ENCODE measurements at regions of chr10 and their contacts with region 1.

Region 1: DNA sequence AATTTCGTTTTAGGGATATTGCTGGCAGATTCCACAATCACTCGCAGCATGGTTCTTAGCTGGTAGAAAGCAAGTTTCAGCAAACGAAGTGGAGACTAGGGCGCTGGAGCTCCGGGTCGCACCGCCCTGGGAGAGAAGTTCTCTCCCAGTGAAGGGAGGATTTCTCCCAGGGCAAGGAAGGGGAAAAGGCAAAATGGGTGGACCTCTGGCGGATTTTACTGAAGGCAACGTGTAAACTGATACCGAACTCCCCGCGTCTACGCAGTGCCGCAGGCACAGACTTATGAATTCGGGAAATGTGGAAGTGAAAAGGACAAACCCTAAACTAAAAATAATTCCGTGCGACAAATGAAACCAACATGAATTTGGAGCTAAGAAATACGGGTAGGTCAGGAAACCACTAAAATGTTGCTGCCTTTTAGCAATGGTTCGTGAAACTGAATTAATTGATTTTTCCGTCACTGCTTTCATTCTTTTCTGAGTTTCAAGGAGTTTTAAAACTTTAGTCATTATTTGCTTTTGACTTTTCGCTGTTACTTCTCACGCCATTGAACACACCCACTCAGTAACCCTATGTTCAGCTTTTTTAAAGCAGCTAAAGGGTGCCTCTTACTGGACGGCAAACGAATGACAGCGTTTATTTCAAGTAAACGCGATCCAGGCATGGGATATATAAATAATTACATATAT is at the start of gene MYOF:
- DNase-seq: peak in 1 of 2 experiments; percentile 59
- H3K4me3 ChIP-seq: peak within 1 kb of the TSS; percentile 66 to 82 (median 73); a peak in 7 of 8 replicates
- H3K27ac ChIP-seq: no peak within 1 kb of the TSS
- H3K4me1 ChIP-seq: peaks cover 0 to 2% (median 0%) of the 10 kb centered on the region in 4 experiments; a peak in 1 of 7 replicates
- H3K27me3 ChIP-seq: peaks cover 0 to 5% (median 0%) of the 10 kb centered on the region in 4 experiments; a peak in 4 of 7 replicates
- CTCF ChIP-seq: peak in 2 of 3 experiments; percentile 52 to 71; a peak in 3 of 4 replicates
- EP300 ChIP-seq: no peak
- POLR2A ChIP-seq: no peak
- RAD21 ChIP-seq: peak; percentile 90
- total RNA-seq, gene MYOF: 2.3 and 3.2 TPM in 2 replicates

Region 2: GRCh38 chr10:93309062-93309461 is 173.2 kb before region 1 on chr10:
- CTCF ChIA-PET with region 1: no interaction called
- POLR2A ChIA-PET with region 1: no interaction called
- DNase-seq: no peak
- H3K4me3 ChIP-seq: no peak overlapping the region
- H3K27ac ChIP-seq: no peak overlapping the region
- H3K4me1 ChIP-seq: no peaks in the 10 kb centered on the region
- H3K27me3 ChIP-seq: no peaks in the 10 kb centered on the region
- CTCF ChIP-seq: no peak
- EP300 ChIP-seq: no peak
- POLR2A ChIP-seq: no peak
- RAD21 ChIP-seq: no peak

Region 3: GRCh38 chr10:93363891-93364648 is 118.2 kb before region 1 on chr10:
- CTCF ChIA-PET with region 1: interaction called, 42 read pairs
- POLR2A ChIA-PET with region 1: no interaction called
- DNase-seq: no peak
- H3K4me3 ChIP-seq: no peak overlapping the region
- H3K27ac ChIP-seq: no peak overlapping the region
- H3K4me1 ChIP-seq: peaks cover 0 to 6% (median 0%) of the 10 kb centered on the region in 4 experiments; a peak in 1 of 7 replicates
- H3K27me3 ChIP-seq: no peaks in the 10 kb centered on the region
- CTCF ChIP-seq: no peak
- EP300 ChIP-seq: no peak
- POLR2A ChIP-seq: no peak
- RAD21 ChIP-seq: no peak

Region 4: DNA sequence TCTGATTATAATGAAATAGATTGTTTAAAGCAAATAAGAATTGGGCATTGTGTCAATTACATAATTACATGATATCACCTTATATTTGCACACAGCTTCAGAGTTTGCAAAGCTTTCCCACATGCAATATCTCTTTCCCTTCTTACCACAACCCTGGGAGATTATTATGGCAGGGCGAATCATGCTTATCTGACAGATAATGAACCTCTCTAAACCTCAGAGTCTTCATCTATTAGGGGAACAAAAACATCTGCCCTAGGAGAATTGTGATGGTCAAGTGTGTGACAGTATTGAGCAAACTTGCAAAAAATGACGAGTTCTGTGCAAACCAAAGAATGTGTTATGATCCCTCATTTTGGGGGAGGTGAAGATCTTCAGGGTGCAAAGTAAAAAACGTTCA is 90.2 kb before region 1 on chr10:
- CTCF ChIA-PET with region 1: interaction called, 26 read pairs
- POLR2A ChIA-PET with region 1: no interaction called
- DNase-seq: no peak
- H3K4me3 ChIP-seq: no peak overlapping the region
- H3K27ac ChIP-seq: no peak overlapping the region
- H3K4me1 ChIP-seq: peaks cover 0 to 3% (median 0%) of the 10 kb centered on the region in 4 experiments; a peak in 2 of 7 replicates
- H3K27me3 ChIP-seq: no peaks in the 10 kb centered on the region
- CTCF ChIP-seq: no peak
- EP300 ChIP-seq: no peak
- POLR2A ChIP-seq: no peak
- RAD21 ChIP-seq: no peak

Region 5: DNA sequence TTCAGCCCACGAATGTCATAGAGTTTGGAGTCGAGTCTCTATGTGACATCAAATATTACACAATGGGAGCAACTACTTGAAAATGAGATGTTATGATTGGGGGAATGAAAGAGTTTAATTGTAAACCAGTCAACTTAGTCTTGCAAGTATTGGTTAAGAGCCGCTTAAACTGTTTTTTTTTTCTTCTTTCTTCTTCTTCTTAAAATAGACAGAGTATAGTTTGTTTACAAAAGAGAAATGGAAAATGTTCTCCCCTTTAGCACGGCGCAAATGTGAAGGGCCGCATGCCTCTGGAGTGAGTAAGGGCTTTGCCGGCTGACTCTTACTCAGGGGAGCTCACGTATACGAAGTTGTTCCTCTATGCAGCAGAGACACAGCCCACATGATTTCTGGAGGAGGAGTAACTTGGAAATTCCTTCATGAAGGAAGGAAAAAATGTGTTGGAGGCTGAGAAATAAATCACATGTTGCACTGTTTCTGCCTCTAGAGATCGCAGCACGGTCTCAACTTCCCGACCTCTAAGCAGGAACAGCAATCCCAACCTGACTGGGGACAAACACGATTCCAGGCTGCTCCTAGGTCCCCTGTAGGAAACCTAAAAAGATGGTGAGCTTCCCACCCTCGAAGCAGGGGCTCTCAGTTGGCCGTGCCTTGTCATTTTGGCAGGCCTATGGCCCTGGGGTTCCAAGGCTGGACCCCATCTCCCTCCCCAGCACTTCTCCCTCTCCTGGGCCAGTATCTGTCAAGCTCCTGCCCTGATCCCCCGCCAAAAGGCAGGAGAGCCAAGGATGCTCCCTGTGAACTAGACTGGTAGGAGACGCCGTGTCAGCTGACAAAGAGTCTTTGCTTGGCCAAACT is 45.0 kb before region 1 on chr10:
- CTCF ChIA-PET with region 1: interaction called, 29 read pairs
- POLR2A ChIA-PET with region 1: interaction called, 5 read pairs
- DNase-seq: peak in 1 of 2 experiments; percentile 68
- H3K4me3 ChIP-seq: peak overlapping the region in 3 of 4 experiments; percentile 20 to 52 (median 31); a peak in 3 of 8 replicates
- H3K27ac ChIP-seq: peak overlapping the region; percentile 74
- H3K4me1 ChIP-seq: peaks cover 21 to 37% (median 34%) of the 10 kb centered on the region in 4 experiments
- H3K27me3 ChIP-seq: no peaks in the 10 kb centered on the region
- CTCF ChIP-seq: no peak
- EP300 ChIP-seq: peak in 1 of 2 experiments; percentile 52; a peak in 1 of 3 replicates
- POLR2A ChIP-seq: peak; percentile 48 to 75
- RAD21 ChIP-seq: no peak

Region 6: GRCh38 chr10:93463678-93464476 is 18.4 kb before region 1 on chr10:
- CTCF ChIA-PET with region 1: interaction called, 20 read pairs
- POLR2A ChIA-PET with region 1: interaction called, 3 read pairs
- DNase-seq: no peak
- H3K4me3 ChIP-seq: no peak overlapping the region
- H3K27ac ChIP-seq: no peak overlapping the region
- H3K4me1 ChIP-seq: peaks cover 0 to 2% (median under 1%) of the 10 kb centered on the region in 4 experiments; a peak in 3 of 7 replicates
- H3K27me3 ChIP-seq: no peaks in the 10 kb centered on the region
- CTCF ChIP-seq: no peak
- EP300 ChIP-seq: no peak
- POLR2A ChIP-seq: no peak
- RAD21 ChIP-seq: no peak

Region 7: GRCh38 chr10:93496322-93497041 is 14.2 kb after region 1 on chr10 and contains the start of gene CEP55:
- CTCF ChIA-PET with region 1: interaction called, 30 read pairs
- POLR2A ChIA-PET with region 1: interaction called, 4 read pairs
- DNase-seq: peak; percentile 73 to 95
- H3K4me3 ChIP-seq: peak within 1 kb of the TSS; percentile 73 to 79 (median 77)
- H3K27ac ChIP-seq: no peak within 1 kb of the TSS
- H3K4me1 ChIP-seq: no peaks in the 10 kb centered on the region; a peak in 1 of 7 replicates
- H3K27me3 ChIP-seq: peaks cover 0 to 2% (median 0%) of the 10 kb centered on the region in 4 experiments; a peak in 2 of 7 replicates
- CTCF ChIP-seq: no peak
- EP300 ChIP-seq: no peak
- POLR2A ChIP-seq: peak in 1 of 2 experiments; percentile 77; a peak in 2 of 3 replicates
- RAD21 ChIP-seq: no peak
- total RNA-seq, gene CEP55: 18.9 and 19.6 TPM in 2 replicates

Region 8: DNA sequence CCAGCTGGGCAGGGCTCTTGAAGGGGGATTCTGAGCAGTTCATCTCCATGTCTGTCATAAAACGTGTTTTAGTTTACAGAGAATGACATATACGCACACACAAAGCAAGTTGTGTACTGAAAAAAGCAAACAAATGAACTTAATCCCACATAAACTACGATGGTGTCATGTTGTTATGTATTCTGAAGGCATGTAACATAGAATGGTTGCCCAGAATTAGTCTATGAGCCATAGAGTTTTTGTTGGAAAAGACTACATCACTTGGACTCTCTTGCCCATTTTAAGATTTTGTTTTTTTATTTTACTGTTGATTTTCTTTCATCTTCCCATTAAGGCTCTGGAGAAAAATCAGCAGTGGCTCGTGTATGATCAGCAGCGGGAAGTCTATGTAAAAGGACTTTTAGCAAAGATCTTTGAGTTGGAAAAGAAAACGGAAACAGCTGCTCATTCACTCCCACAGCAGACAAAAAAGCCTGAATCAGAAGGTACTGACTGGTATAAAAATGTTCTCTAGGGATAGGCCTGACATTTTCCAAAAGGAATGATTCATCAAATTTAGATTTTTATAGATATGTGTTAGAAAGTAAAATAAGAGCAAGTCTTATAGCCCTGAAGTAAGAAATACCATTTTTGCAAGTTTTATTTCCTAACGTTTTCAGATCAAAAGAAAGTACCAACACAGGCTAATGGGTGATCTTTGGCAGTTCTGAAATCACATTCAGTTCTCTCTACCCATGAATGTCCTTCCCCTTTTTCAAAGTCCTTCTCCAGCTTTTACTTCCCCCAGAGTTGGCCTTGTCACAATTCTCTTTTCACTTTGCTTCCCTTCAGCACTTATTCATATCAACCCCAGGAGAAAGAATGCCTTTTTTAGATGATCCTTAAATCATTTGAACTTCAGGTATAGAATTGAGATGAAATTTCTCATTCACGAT is 33.0 kb after region 1 on chr10:
- CTCF ChIA-PET with region 1: interaction called, 201 read pairs
- POLR2A ChIA-PET with region 1: no interaction called
- DNase-seq: no peak
- H3K4me3 ChIP-seq: no peak overlapping the region
- H3K27ac ChIP-seq: no peak overlapping the region
- H3K4me1 ChIP-seq: no peaks in the 10 kb centered on the region; a peak in 1 of 7 replicates
- H3K27me3 ChIP-seq: no peaks in the 10 kb centered on the region
- CTCF ChIP-seq: no peak
- EP300 ChIP-seq: no peak
- POLR2A ChIP-seq: no peak
- RAD21 ChIP-seq: no peak

Region 9: GRCh38 chr10:93573051-93573909 is 91.0 kb after region 1 on chr10:
- CTCF ChIA-PET with region 1: no interaction called
- POLR2A ChIA-PET with region 1: no interaction called
- DNase-seq: no peak
- H3K4me3 ChIP-seq: no peak overlapping the region
- H3K27ac ChIP-seq: no peak overlapping the region
- H3K4me1 ChIP-seq: peaks cover 0 to 1% (median 0%) of the 10 kb centered on the region in 4 experiments; a peak in 1 of 7 replicates
- H3K27me3 ChIP-seq: peaks cover 10 to 37% (median 29%) of the 10 kb centered on the region in 4 experiments
- CTCF ChIP-seq: no peak
- EP300 ChIP-seq: no peak
- POLR2A ChIP-seq: no peak
- RAD21 ChIP-seq: no peak

Measured in H1 (cell line).